ENCODE measurements at regions of chr14 and their contacts with region 1.

Region 1: GRCh38 chr14:20855652-20856291 is 35.4 kb upstream of the RNASE3 start:
- DNase-seq: no peak
- ATAC-seq: peak; percentile 89

Region 2: DNA sequence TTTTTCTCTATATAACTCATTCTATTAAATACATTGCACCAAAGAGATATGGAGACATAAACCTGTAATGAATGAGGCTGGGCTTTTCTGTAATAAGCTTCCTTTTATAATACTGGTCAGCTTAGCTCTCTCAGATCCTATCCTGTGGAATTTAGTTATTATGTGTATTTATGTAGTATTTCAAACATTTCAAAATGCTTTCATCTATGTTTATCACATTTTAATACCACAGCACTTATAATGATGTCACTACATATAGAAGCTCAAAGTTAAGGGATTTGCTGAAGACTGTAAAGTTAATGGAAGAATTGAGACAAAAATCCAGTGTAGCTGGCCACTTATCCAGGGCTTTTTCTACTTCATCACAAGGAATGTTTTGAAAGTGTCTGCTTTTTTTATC is 155.8 kb before region 1 on chr14:
- intact Hi-C with region 1: loop called (anchors 5 kb)
- DNase-seq: no peak
- ATAC-seq: no peak

Region 3: DNA sequence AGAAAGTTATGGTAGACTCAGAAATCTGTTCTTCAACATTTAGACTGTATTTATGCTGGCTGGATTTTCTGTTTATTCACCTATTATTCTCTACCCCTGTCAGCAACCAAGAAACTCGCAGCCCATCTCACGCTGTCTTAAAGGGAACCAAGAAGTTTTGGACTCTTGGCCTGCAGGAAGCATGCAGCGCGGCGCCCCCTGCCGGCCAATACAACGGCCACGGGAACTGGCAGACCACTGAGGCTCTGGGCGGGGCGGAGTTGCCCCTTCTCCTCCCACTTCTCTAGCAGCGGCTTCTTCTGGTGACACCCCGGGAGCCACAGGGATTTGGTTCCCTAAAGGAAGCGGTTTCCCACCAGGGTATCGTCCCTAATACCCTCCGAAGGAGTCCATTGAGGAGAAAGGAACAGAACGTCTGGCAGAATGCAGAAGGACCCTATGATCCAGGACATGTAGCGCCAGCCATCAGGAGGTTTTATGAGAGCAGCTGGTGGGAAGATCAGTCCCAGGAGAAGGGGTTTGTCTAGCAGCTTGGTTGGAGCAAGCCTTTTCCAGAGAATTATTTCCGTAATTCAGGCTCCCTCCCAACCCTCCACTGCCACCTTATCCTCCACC is 78.5 kb after region 1 on chr14:
- intact Hi-C with region 1: no loop called
- DNase-seq: no peak
- ATAC-seq: no peak

Region 4: GRCh38 chr14:20970983-20971704 is 115.4 kb after region 1 on chr14:
- intact Hi-C with region 1: loop called (anchors 10 kb)
- DNase-seq: peak; percentile 90
- ATAC-seq: peak; percentile 96